Prostate gland (tissue), 2 donors: ENCODE measurements at regions of chr4 and their contacts with region 1.

Region 1: DNA sequence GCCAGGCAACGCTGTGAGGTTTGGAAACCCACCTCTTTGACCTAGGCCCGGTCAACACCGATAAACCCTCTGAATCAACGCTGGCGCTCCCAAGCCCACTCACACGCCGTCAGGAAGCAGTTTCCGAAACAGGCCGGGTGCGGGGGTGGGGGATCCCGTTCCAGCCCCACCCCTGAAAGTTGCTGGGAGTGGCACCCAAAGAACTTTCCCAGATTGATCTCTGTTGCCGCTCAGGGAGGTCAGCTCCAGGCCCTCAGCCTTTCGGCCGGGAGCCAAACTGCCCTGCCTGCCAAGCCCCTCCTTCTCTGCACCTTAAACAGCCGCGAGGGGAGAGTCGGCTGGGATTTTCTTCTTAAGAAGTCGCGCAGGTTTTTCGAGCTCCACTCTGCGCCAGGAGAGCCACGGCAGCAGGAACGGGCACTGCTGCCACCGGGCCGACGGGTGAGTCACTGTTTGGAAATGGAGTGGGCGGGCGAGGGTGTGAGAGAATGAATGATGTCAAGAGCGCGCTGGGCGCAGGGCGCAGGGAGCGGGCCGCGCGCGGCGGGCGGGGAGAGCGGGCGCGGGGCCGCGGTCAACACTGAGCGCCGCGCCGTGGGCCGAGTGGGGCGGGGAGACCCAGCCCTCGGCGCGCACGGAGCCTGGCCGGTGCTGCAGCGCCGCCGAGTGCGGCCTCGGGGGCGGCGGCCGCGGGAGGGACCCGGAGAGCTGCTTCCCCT is at the start of gene SGMS2:
- DNase-seq: peak; percentile 92
- H3K4me3 ChIP-seq: peak within 1 kb of the TSS; percentile 57 to 58
- H3K27ac ChIP-seq: peak within 1 kb of the TSS; percentile 88 to 93
- H3K4me1 ChIP-seq: no peaks in the 10 kb centered on the region
- H3K27me3 ChIP-seq: no peaks in the 10 kb centered on the region
- CTCF ChIP-seq: peak in 1 of 4 experiments; percentile 23
- POLR2A ChIP-seq: peak; percentile 78
- total RNA-seq, gene SGMS2: 37.4 to 53.6 TPM

Region 2: DNA sequence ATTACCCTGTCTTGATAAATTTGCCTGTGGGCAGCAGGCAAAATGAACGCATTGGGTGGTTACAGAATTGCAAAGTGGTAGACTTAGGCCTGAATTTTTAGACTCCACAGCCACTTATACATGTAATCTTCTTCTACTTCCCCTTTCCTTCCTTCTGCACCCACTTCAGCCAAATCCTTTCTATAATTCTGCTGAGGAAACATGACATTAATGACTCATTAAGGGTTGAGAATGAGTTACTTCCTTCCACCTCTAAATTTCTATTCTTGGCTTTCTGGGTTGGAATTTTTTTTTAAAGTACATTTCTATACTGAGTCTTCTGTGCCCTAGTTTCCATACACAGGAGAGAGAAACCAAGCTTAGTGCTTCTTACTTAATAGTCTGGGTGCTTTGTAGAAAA is 114.6 kb before region 1 on chr4:
- intact Hi-C with region 1: no loop called
- DNase-seq: no peak
- H3K4me3 ChIP-seq: no peak overlapping the region
- H3K27ac ChIP-seq: no peak overlapping the region
- H3K4me1 ChIP-seq: no peaks in the 10 kb centered on the region
- H3K27me3 ChIP-seq: no peaks in the 10 kb centered on the region
- CTCF ChIP-seq: no peak
- POLR2A ChIP-seq: no peak

Region 3: GRCh38 chr4:107740381-107740780 is 84.1 kb before region 1 on chr4:
- intact Hi-C with region 1: loop called (anchors 10 kb)
- DNase-seq: no peak
- H3K4me3 ChIP-seq: no peak overlapping the region
- H3K27ac ChIP-seq: peak overlapping the region; percentile 58 to 68
- H3K4me1 ChIP-seq: no peaks in the 10 kb centered on the region
- H3K27me3 ChIP-seq: no peaks in the 10 kb centered on the region
- CTCF ChIP-seq: peak in 2 of 4 experiments; percentile 9 to 15
- POLR2A ChIP-seq: no peak

Region 4: GRCh38 chr4:107757864-107758476 is 66.5 kb before region 1 on chr4:
- intact Hi-C with region 1: no loop called
- DNase-seq: no peak
- H3K4me3 ChIP-seq: no peak overlapping the region
- H3K27ac ChIP-seq: no peak overlapping the region
- H3K4me1 ChIP-seq: no peaks in the 10 kb centered on the region
- H3K27me3 ChIP-seq: no peaks in the 10 kb centered on the region
- CTCF ChIP-seq: peak; percentile 27 to 75 (median 64)
- POLR2A ChIP-seq: no peak

Region 5: DNA sequence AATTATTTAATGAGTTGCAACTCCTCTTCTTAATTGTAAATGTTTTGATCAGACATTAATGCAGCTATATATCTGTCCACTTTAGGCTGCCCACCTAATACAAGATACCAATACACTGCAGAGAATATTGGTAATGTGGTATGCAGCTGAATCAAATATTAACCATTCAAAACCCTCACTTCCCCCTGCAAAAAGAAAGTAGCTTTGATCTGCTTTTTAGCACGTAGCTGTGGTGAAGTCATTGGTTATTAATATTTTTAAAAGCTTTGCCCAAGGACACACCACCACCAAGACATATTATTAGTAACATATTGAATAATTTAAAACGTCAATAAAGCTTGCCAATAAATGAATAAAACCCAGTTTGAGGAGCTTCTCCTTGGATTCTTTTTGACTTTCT is 78.2 kb after region 1 on chr4:
- intact Hi-C with region 1: loop called (anchors 5 kb)
- DNase-seq: no peak
- H3K4me3 ChIP-seq: no peak overlapping the region
- H3K27ac ChIP-seq: no peak overlapping the region
- H3K4me1 ChIP-seq: no peaks in the 10 kb centered on the region
- H3K27me3 ChIP-seq: no peaks in the 10 kb centered on the region
- CTCF ChIP-seq: no peak
- POLR2A ChIP-seq: no peak

Region 6: DNA sequence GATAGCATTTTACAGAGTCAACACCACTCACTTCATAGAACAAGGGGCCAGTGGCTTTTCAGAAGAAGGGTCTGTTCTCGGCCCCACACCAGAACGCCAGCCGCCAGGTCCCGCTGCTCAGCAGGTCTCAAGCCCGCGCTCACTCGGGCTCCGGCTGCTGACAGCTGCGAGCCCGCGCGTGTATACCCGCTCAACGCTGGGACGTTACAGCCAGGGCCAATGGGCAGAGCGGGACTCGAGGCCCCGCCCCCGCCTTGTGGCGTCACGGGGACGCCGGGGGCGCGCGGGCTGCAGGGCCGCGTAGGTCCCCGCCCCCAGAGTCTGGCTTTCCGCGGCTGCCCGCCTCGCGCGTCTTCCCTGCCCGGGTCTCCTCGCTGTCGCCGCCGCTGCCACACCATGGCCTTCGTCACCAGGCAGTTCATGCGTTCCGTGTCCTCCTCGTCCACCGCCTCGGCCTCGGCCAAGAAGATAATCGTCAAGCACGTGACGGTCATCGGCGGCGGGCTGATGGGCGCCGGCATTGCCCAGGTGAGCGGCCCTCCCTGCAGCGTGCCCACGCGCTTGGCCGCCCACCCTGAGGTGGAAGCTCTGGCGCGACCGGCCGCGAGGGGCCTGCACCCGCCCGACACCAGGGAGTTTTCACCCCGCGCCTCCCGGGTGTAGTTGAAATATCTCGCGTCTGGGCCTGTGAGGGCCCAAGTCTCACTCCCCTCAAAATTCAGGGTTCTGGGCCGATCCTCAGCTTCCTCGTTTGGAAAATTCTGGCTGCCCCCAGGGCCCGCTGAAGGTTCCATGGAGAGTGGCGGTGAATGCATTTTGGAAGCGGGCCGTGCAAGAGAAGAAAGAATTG is 165.2 kb after region 1 on chr4 and contains the start of gene HADH:
- intact Hi-C with region 1: loop called (anchors 10 kb)
- DNase-seq: peak; percentile 95
- H3K4me3 ChIP-seq: peak within 1 kb of the TSS; percentile 73 to 89
- H3K27ac ChIP-seq: peak within 1 kb of the TSS; percentile 86 to 90
- H3K4me1 ChIP-seq: no peaks in the 10 kb centered on the region
- H3K27me3 ChIP-seq: no peaks in the 10 kb centered on the region
- CTCF ChIP-seq: peak in 1 of 4 experiments; percentile 22
- POLR2A ChIP-seq: peak; percentile 92
- total RNA-seq, gene HADH: 69.0 to 75.2 TPM

Region 7: GRCh38 chr4:109511414-109511813 is 1686.9 kb after region 1 on chr4:
- intact Hi-C with region 1: no loop called
- DNase-seq: no peak
- H3K4me3 ChIP-seq: no peak overlapping the region
- H3K27ac ChIP-seq: no peak overlapping the region
- H3K4me1 ChIP-seq: no peaks in the 10 kb centered on the region
- H3K27me3 ChIP-seq: no peaks in the 10 kb centered on the region
- CTCF ChIP-seq: no peak
- POLR2A ChIP-seq: no peak